ENCODE measurements at regions of chr5 and their contacts with region 1.

Region 1: GRCh38 chr5:91383027-91383955 is at the start of gene ARRDC3:
- DNase-seq: peak; percentile 90 to 99 (median 98)
- ATAC-seq: peak; percentile 32 to 46
- H3K4me3 Mint-ChIP-seq: peak within 1 kb of the TSS; percentile 90 to 100 (median 99)
- H3K27ac Mint-ChIP-seq: peak within 1 kb of the TSS; percentile 92 to 100 (median 99)
- H3K4me1 Mint-ChIP-seq: peaks cover 9 to 26% (median 20%) of the 10 kb centered on the region in 4 donors
- H3K27me3 Mint-ChIP-seq: no peaks in the 10 kb centered on the region
- polyA plus RNA-seq, gene ARRDC3: 72.6 to 134 (median 113) TPM

Region 2: DNA sequence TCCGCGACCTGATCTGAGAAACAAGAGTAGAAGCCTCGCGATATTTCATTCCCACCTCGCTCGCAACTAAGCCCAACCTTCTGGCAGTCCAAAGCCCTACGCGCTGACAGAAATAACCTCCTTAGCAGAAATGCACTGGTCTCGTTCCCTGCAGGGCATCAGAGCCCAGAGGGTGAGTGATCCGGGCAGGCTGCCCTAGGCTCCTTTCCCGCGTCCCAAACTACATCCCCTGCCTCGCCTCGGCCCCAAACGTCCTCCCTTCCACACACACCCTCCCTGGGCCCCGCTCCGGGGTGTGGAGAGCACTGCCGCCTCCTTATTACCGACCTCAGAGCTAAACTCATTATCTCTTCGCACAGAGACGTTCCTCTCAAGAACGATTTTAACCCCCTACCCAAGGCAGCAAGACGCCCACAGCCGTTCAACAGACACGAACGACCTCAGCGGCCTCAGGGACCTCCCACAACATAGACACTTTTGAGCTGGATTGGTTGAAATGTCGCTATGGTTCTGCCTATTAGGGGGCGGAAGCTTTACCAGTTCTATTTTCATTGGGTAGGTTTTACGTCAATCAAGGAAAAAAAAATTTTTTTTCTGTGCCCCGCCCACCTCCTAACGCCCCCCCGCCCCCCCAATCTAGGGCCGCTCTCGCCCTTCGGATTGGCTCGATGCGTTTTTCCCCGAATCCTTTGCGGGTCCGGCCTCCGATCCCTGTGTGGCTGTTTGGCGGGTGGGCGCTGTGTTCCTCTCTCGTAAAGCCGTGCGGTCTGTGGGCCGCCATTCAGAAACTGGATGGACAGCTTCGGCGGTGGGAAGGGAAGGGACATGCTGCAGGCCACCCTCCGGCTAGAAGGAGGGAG is 973.7 kb before region 1 on chr5 and contains the start of gene CETN3:
- POLR2A ChIA-PET with region 1: interaction called, 25 read pairs
- DNase-seq: peak; percentile 77 to 96 (median 90)
- ATAC-seq: peak; percentile 92 to 93
- H3K4me3 Mint-ChIP-seq: no peak within 1 kb of the TSS
- H3K27ac Mint-ChIP-seq: no peak within 1 kb of the TSS
- H3K4me1 Mint-ChIP-seq: peaks cover 8 to 26% (median 17%) of the 10 kb centered on the region in 4 donors
- H3K27me3 Mint-ChIP-seq: no peaks in the 10 kb centered on the region
- polyA plus RNA-seq, gene CETN3: 19.0 to 33.0 (median 26.7) TPM

Region 3: DNA sequence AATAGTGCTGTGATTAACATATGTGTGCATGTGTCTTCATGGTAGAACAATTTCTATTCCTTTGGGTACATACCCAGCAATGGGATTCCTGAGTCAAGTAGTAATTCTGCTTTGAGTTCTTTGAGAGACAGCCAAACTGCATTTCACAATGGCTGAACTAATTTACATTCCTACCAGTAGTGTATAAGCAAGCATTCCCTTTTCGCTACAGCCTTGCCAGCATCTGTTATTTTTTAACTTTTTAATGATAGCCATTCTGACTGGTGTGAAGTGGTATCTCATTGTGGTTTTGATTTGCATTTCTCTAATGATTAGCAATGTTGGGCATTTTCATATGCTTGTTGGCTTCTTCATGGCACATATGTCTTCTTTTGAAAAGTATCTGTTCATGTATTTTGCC is 308.7 kb before region 1 on chr5:
- POLR2A ChIA-PET with region 1: no interaction called
- DNase-seq: no peak
- ATAC-seq: no peak
- H3K4me3 Mint-ChIP-seq: no peak overlapping the region
- H3K27ac Mint-ChIP-seq: no peak overlapping the region
- H3K4me1 Mint-ChIP-seq: no peaks in the 10 kb centered on the region
- H3K27me3 Mint-ChIP-seq: peaks cover 0 to 4% (median 0%) of the 10 kb centered on the region in 5 donors

Region 4: GRCh38 chr5:91101600-91102379 is 281.5 kb before region 1 on chr5:
- POLR2A ChIA-PET with region 1: interaction called, 13 read pairs
- DNase-seq: peak; percentile 17 to 69 (median 38)
- ATAC-seq: peak; percentile 77 to 80
- H3K4me3 Mint-ChIP-seq: no peak overlapping the region
- H3K27ac Mint-ChIP-seq: no peak overlapping the region
- H3K4me1 Mint-ChIP-seq: no peaks in the 10 kb centered on the region
- H3K27me3 Mint-ChIP-seq: peaks cover 0 to 5% (median 2%) of the 10 kb centered on the region in 5 donors

Region 5: DNA sequence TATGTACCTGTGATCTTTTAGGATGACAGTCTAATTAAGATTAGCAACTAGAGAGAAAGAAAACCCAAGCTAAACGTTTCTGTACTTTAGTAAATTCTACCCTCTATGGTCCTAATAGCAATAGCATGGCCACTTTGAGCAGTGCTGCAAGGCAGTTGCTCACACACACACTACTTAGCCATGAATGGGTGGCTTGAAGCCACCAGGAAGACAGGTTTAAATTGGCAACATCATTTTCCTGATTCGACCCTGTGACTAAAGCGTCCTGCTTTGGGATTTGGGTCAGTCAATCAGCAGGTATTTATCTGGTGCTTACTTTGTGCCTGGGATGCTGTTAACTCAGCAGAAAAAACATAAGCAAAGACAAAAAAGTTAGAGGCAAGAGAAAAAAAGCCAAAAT is 150.8 kb before region 1 on chr5:
- POLR2A ChIA-PET with region 1: interaction called, 58 read pairs
- DNase-seq: no peak
- ATAC-seq: no peak
- H3K4me3 Mint-ChIP-seq: no peak overlapping the region
- H3K27ac Mint-ChIP-seq: no peak overlapping the region
- H3K4me1 Mint-ChIP-seq: no peaks in the 10 kb centered on the region
- H3K27me3 Mint-ChIP-seq: peaks cover 0 to 5% (median 0%) of the 10 kb centered on the region in 5 donors

Region 6: GRCh38 chr5:91311697-91312501 is 71.4 kb before region 1 on chr5:
- POLR2A ChIA-PET with region 1: interaction called, 274 read pairs
- DNase-seq: peak in 9 of 10 donors; percentile 42 to 85 (median 70)
- ATAC-seq: peak; percentile 86 to 91
- H3K4me3 Mint-ChIP-seq: peak overlapping the region; percentile 26 to 82 (median 77)
- H3K27ac Mint-ChIP-seq: peak overlapping the region; percentile 87 to 98 (median 96)
- H3K4me1 Mint-ChIP-seq: peaks cover 28 to 62% (median 47%) of the 10 kb centered on the region in 4 donors
- H3K27me3 Mint-ChIP-seq: no peaks in the 10 kb centered on the region

Region 7: GRCh38 chr5:91419571-91420537 is 36.6 kb after region 1 on chr5:
- POLR2A ChIA-PET with region 1: interaction called, 33 read pairs
- DNase-seq: peak; percentile 41 to 82 (median 72)
- ATAC-seq: peak; percentile 59 to 70
- H3K4me3 Mint-ChIP-seq: no peak overlapping the region
- H3K27ac Mint-ChIP-seq: peak overlapping the region in 3 of 10 donors; percentile 12 to 36 (median 25)
- H3K4me1 Mint-ChIP-seq: peaks cover 13 to 33% (median 27%) of the 10 kb centered on the region in 4 donors
- H3K27me3 Mint-ChIP-seq: peaks cover 0 to 4% (median 0%) of the 10 kb centered on the region in 5 donors